ENCODE measurements at regions of chr4 and their contacts with region 1.

Region 1: GRCh38 chr4:152500800-152501434 is 35.0 kb downstream of the FBXW7 start:
- DNase-seq: no peak
- H3K4me3 ChIP-seq: no peak overlapping the region
- H3K27ac ChIP-seq: no peak overlapping the region
- H3K4me1 ChIP-seq: peaks cover 5% of the 10 kb centered on the region
- H3K27me3 ChIP-seq: no peaks in the 10 kb centered on the region
- CTCF ChIP-seq: peak; percentile 84

Region 2: GRCh38 chr4:151905197-151905596 is 595.7 kb before region 1 on chr4:
- intact Hi-C with region 1: no loop called
- DNase-seq: no peak
- H3K4me3 ChIP-seq: no peak overlapping the region
- H3K27ac ChIP-seq: no peak overlapping the region
- H3K4me1 ChIP-seq: no peaks in the 10 kb centered on the region
- H3K27me3 ChIP-seq: no peaks in the 10 kb centered on the region
- CTCF ChIP-seq: no peak

Region 3: DNA sequence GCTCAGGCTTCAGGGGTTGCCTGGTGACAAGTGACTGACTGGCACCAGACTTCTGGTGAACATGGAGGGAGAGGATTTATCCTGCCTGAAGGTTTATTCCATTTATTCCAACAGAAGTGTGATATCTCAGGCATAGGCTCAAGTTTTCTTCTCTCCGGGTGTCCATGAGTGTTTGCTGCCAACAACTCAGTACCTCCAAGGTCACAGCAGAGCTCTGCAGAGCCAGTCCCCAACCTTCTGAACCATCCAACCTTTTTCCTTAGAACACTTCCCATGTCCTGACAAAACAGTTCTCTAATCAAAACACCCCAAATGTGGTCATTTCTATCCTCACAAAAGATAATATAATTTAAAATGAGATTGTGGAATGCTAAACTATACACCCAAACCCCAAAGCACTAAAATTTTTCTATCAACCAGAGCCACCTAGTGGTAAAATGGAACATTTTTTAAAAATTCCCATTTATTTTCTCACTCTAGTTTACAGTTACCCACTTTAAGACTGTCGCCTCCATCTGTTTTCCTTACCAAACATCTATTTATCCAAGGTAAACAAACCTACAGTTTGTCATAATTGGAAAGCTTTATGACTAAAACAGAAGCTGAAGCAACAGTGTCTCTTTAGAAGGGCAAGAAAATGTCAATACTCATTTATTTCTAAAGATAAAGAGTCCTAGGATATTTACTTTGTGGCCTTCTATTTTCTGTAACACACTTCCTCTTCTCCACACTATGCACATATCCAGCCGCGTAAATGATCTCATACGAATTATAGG is 139.3 kb after region 1 on chr4:
- intact Hi-C with region 1: loop called (anchors 5 kb)
- DNase-seq: no peak
- H3K4me3 ChIP-seq: no peak overlapping the region
- H3K27ac ChIP-seq: no peak overlapping the region
- H3K4me1 ChIP-seq: peaks cover 15% of the 10 kb centered on the region
- H3K27me3 ChIP-seq: no peaks in the 10 kb centered on the region
- CTCF ChIP-seq: peak; percentile 63

Region 4: DNA sequence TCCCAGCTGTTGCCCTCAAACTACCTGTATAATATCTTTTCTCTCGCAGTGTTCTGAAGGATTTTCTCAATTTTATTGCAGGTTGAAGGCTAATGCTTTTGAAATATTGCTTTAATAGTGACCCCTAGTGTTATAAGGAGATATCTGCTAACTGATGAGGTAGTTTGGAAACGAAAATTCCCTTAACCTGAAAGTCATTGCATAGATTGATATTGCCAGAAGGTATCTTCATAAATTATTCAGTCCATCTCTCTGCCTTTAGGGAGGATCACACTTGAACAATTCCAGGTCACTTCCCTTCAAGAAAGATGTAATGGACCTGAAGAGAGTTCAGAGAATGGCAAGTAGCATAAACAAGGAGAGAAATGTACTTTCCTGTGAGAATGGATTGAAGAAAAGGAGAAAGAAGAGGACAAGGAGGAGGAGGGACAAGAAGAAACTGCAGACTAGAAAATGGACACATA is 234.5 kb after region 1 on chr4:
- intact Hi-C with region 1: loop called (anchors 5 kb)
- DNase-seq: no peak
- H3K4me3 ChIP-seq: no peak overlapping the region
- H3K27ac ChIP-seq: no peak overlapping the region
- H3K4me1 ChIP-seq: no peaks in the 10 kb centered on the region
- H3K27me3 ChIP-seq: no peaks in the 10 kb centered on the region
- CTCF ChIP-seq: peak; percentile 73

Measured in left ventricle myocardium inferior (tissue), 1 donor.